Psoas muscle (tissue), 8 donors: ENCODE measurements at regions of chr6 and their contacts with region 1.

Region 1: GRCh38 chr6:142692942-142693341 is 252.0 kb downstream of the HIVEP2 start:
- DNase-seq: peak; percentile 61 to 72
- ATAC-seq: peak; percentile 76 to 88 (median 80)
- H3K4me3 ChIP-seq: no peak overlapping the region
- H3K27ac ChIP-seq: no peak overlapping the region
- H3K4me1 ChIP-seq: peaks cover 8% of the 10 kb centered on the region
- H3K27me3 ChIP-seq: peaks cover 0 to under 1% (median 0%) of the 10 kb centered on the region in 3 donors
- CTCF ChIP-seq: peak; percentile 93

Region 2: DNA sequence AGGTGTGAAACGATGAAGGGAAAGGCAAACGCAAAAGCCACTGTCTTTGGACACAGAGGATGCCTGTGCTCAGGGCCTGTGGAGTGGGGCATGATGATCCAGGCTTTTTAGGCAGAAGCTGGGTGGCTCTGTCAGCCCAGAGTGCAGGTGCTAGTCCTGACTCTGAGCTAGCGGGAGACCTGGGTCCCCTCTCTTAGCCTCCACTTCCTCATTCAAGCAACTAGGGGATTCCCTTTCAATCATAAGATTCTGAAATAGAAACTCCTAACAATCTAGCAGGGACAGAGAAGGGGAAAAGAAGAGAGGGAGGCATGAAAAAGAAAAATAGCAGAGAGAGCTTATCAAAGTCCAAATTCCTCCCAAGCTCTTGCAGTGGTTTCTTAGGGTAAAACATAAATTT is 259.7 kb after region 1 on chr6:
- intact Hi-C with region 1: loop called in 1 of 2 experiments (anchors 5 kb)
- DNase-seq: no peak
- ATAC-seq: no peak
- H3K4me3 ChIP-seq: no peak overlapping the region
- H3K27ac ChIP-seq: no peak overlapping the region
- H3K4me1 ChIP-seq: no peaks in the 10 kb centered on the region
- H3K27me3 ChIP-seq: no peaks in the 10 kb centered on the region
- CTCF ChIP-seq: no peak

Region 3: GRCh38 chr6:143026696-143027449 is 333.9 kb after region 1 on chr6:
- intact Hi-C with region 1: loop called (anchors 1 to 5 kb)
- DNase-seq: peak; percentile 42 to 60
- ATAC-seq: peak; percentile 64 to 91 (median 78)
- H3K4me3 ChIP-seq: no peak overlapping the region
- H3K27ac ChIP-seq: no peak overlapping the region
- H3K4me1 ChIP-seq: no peaks in the 10 kb centered on the region
- H3K27me3 ChIP-seq: no peaks in the 10 kb centered on the region
- CTCF ChIP-seq: peak; percentile 68

Region 4: GRCh38 chr6:143158113-143158581 is 465.2 kb after region 1 on chr6:
- intact Hi-C with region 1: loop called in 1 of 2 experiments (anchors 10 kb)
- DNase-seq: no peak
- ATAC-seq: no peak
- H3K4me3 ChIP-seq: no peak overlapping the region
- H3K27ac ChIP-seq: no peak overlapping the region
- H3K4me1 ChIP-seq: peaks cover 31% of the 10 kb centered on the region
- H3K27me3 ChIP-seq: no peaks in the 10 kb centered on the region
- CTCF ChIP-seq: no peak

Region 5: DNA sequence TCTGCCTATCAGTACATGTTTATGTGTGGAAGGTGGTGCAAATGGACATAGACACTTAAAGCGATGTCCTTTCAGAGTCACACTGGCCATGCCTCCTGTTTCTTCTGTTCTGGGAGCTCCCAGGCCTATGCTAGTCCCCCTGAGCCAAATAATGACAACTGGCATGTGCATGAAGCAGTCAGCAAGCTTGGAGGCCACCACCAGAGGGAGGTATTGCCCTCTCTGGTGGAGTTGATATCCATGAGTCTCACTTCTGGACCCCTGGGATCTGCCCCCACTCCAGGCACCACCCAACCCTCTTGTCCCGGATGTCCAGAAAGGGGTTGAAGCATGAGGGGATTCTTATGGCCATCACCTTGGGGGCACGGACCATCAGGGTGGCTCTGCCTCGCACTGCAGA is 539.9 kb after region 1 on chr6:
- intact Hi-C with region 1: loop called in 1 of 2 experiments (anchors 10 kb)
- DNase-seq: peak in 1 of 2 donors; percentile 17
- ATAC-seq: no peak
- H3K4me3 ChIP-seq: no peak overlapping the region
- H3K27ac ChIP-seq: no peak overlapping the region
- H3K4me1 ChIP-seq: peaks cover 4% of the 10 kb centered on the region
- H3K27me3 ChIP-seq: no peaks in the 10 kb centered on the region
- CTCF ChIP-seq: peak; percentile 20

Region 6: DNA sequence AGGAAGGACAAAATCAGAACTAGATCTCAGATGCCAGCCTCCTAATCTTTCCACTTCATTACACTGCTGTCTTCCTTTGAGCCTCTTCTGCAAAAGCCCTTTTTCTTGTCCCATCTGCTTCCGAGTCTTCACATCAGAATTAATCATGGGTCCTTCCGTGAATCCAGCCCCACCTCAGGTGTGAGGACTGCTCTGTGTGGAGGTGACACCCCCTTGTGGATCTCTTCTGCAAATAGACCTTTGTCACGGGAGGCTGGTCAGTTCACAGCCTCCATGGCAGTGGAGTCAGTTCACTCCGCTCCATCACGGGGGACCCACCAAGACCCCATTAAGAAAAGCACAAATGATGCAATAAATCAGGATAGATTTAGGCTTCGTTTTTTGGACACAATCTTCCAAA is 586.4 kb after region 1 on chr6:
- intact Hi-C with region 1: loop called (anchors 2 to 10 kb)
- DNase-seq: no peak
- ATAC-seq: peak; percentile 71 to 78 (median 73)
- H3K4me3 ChIP-seq: no peak overlapping the region
- H3K27ac ChIP-seq: no peak overlapping the region
- H3K4me1 ChIP-seq: no peaks in the 10 kb centered on the region
- H3K27me3 ChIP-seq: no peaks in the 10 kb centered on the region
- CTCF ChIP-seq: peak; percentile 53

Region 7: GRCh38 chr6:143427109-143427817 is 734.3 kb after region 1 on chr6:
- intact Hi-C with region 1: loop called (anchors 1 to 5 kb)
- DNase-seq: peak; percentile 55 to 73
- ATAC-seq: peak; percentile 84 to 91 (median 88)
- H3K4me3 ChIP-seq: no peak overlapping the region
- H3K27ac ChIP-seq: no peak overlapping the region
- H3K4me1 ChIP-seq: no peaks in the 10 kb centered on the region
- H3K27me3 ChIP-seq: no peaks in the 10 kb centered on the region
- CTCF ChIP-seq: peak; percentile 89